T-cell (primary cell): ENCODE measurements at regions of chr3 and their contacts with region 1.

Region 1: GRCh38 chr3:41362638-41363559 is 163.6 kb downstream of the CTNNB1 start:
- DNase-seq: no peak
- ATAC-seq: no peak
- H3K4me3 ChIP-seq: no peak overlapping the region
- H3K4me3 Mint-ChIP-seq: no peak overlapping the region
- H3K27ac ChIP-seq: no peak overlapping the region
- H3K27ac Mint-ChIP-seq: no peak overlapping the region
- H3K4me1 ChIP-seq: no peaks in the 10 kb centered on the region
- H3K4me1 Mint-ChIP-seq: no peaks in the 10 kb centered on the region
- H3K27me3 ChIP-seq: peaks cover 0 to 2% of the 10 kb centered on the region in 2 experiments
- H3K27me3 Mint-ChIP-seq: no peaks in the 10 kb centered on the region

Region 2: DNA sequence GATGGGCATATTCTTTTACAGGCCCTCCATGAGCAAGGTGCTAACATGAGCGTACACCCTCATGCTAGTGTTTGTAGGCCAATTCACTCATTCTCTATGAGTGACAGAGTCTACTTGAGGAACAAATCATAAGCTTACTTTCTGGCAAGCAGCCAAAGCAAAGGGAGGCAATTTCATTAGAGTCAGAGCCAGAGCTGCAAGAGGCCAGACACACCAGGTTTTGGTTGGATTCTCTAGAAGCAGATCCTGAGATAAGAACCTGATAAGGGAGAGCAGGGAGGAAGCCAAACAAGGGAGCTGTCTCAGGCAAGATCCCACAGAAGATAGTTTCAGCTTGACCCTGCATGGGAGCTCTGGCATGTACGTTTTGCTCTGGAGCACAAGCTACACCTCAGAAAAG is 377.7 kb before region 1 on chr3:
- CTCF ChIA-PET with region 1: no interaction called
- POLR2A ChIA-PET with region 1: interaction called in 1 of 2 experiments, 13 read pairs
- DNase-seq: no peak
- ATAC-seq: no peak
- H3K4me3 ChIP-seq: no peak overlapping the region
- H3K4me3 Mint-ChIP-seq: no peak overlapping the region
- H3K27ac ChIP-seq: no peak overlapping the region
- H3K27ac Mint-ChIP-seq: no peak overlapping the region
- H3K4me1 ChIP-seq: no peaks in the 10 kb centered on the region
- H3K4me1 Mint-ChIP-seq: peaks cover 7 to 10% (median 10%) of the 10 kb centered on the region in 3 donors
- H3K27me3 ChIP-seq: peaks cover 0 to 5% of the 10 kb centered on the region in 2 experiments
- H3K27me3 Mint-ChIP-seq: peaks cover 19 to 22% of the 10 kb centered on the region in 2 donors